AG04449 (cell line): ENCODE measurements at regions of chr9 and their contacts with region 1.

Region 1: DNA sequence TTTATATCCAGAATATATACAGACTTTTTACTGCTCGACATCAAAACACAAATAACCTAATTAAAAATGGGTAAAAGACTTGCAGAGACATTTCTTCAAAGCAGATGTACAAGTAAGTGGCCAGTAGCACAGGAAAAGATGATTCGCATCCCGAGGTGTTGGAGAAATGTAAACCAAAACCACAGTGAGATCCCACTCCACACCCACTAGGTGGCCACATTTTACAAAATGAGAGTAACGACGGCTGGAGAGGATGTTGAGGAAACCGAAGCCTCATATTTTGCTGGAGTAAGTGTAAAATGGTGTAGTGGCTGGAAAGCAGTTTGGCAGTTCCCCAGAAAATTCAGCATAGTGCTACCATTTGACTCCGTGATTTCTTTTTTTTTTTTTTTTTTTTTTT is 21.2 kb upstream of the GBGT1 start:
- DNase-seq: peak; percentile 19
- H3K4me3 ChIP-seq: no peak overlapping the region
- CTCF ChIP-seq: peak; percentile 64

Region 2: GRCh38 chr9:133170716-133171559 is 14.0 kb before region 1 on chr9:
- CTCF ChIA-PET with region 1: interaction called, 112 read pairs
- POLR2A ChIA-PET with region 1: no interaction called
- DNase-seq: no peak
- H3K4me3 ChIP-seq: no peak overlapping the region
- CTCF ChIP-seq: no peak

Region 3: GRCh38 chr9:133199648-133200321 is 14.8 kb after region 1 on chr9:
- CTCF ChIA-PET with region 1: interaction called, 31 read pairs
- POLR2A ChIA-PET with region 1: no interaction called
- DNase-seq: no peak
- H3K4me3 ChIP-seq: peak overlapping the region; percentile 49
- CTCF ChIP-seq: peak; percentile 42

Region 4: DNA sequence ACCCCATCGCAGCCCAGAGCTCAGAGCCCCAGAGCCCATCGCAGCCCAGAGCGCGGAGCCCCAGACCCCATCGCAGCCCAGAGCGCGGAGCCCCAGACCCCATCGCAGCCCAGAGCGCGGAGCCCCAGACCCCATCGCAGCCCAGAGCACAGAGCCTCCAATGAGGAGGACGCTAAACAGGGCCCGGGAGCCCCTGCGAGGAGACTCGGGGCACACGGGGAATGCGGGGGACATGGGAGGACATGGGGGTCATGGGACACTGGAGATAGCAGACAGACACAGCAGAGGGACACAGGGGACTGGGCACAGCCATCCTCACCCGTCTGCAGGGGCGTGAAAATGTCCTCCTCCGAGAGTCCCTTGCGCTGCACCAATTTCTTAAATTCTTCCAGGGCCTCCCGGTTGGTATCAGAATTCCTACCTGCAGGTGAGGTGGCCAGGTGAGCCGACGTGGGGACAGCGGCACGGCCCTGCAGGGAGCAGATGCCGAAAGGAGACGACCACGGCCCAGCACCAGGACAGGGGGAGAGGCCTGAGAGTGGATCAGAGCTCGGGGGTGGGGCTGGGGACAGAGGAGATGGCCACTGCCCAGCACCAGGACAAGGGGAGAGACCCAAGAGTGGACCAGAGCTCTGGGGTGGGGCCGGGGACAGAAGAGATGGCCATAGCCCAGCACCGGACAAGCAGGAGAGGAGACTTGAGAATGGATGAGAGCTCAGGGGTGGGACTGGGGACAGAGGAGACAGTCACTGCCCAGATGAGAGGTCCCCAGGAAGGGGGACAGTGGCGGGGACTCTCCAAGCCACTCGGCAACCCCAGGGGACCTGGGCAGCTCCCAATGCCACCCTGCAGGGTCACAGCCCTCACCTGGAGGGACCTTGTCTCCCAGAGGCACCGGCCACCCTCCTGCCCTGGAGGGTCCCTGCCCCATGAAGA is 21.3 kb after region 1 on chr9:
- CTCF ChIA-PET with region 1: interaction called, 13 read pairs
- POLR2A ChIA-PET with region 1: interaction called, 4 read pairs
- DNase-seq: no peak
- H3K4me3 ChIP-seq: no peak overlapping the region
- CTCF ChIP-seq: no peak

Region 5: GRCh38 chr9:133334161-133334560 is 149.2 kb after region 1 on chr9:
- CTCF ChIA-PET with region 1: interaction called, 62 read pairs
- POLR2A ChIA-PET with region 1: no interaction called
- DNase-seq: no peak
- H3K4me3 ChIP-seq: no peak overlapping the region
- CTCF ChIP-seq: no peak

Region 6: GRCh38 chr9:133478851-133479711 is 294.1 kb after region 1 on chr9 and contains the start of gene SLC2A6:
- CTCF ChIA-PET with region 1: interaction called, 112 read pairs
- POLR2A ChIA-PET with region 1: no interaction called
- DNase-seq: no peak
- H3K4me3 ChIP-seq: peak within 1 kb of the TSS; percentile 66
- CTCF ChIP-seq: no peak

Region 7: DNA sequence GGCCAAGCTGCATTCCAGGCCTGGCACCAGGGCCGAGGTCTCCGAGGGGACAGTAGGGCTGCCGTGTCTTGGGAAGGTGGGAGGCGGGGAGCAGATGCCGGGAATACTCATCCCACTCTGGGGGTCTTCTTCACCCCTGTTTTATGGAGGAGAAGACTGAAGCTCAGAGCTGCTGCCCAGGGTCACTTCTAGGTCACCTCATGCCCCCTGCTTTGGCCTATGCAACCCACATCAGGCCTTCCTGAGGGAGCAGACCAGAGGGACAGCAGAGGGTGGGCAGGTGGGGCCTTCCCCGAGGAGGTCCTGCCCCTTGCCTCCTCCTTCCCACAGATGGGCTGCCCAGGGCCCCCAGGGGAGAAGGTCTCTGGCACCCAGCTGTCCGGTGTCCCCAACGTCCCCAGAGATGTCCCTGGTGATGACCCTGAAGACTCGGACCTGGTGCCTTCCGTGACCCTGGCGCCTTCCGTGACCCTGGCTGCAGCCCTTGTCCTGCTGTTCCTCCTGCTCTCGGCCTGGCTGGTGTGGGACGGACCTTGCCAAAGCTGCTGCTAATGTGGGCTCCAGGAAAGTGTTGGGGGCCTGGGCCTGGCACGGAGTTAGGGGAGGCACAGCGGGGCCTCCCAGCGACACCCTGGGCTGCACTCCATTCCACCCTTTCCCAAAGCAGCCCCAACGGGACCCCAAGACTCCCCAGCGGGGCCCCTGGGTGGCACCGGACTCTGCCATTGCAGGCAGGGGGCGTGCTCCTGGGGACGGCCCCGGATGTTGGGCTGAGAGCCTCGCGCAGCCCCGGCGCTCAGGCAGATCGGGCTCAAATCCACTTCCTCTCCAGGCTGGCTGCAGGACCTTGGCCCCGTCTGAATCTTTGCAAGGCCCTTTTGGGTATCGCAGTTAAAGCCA is 300.6 kb after region 1 on chr9:
- CTCF ChIA-PET with region 1: interaction called, 112 read pairs
- POLR2A ChIA-PET with region 1: no interaction called
- DNase-seq: no peak
- H3K4me3 ChIP-seq: no peak overlapping the region
- CTCF ChIP-seq: no peak